ENCODE measurements at regions of chr20 and their contacts with region 1.

Region 1: DNA sequence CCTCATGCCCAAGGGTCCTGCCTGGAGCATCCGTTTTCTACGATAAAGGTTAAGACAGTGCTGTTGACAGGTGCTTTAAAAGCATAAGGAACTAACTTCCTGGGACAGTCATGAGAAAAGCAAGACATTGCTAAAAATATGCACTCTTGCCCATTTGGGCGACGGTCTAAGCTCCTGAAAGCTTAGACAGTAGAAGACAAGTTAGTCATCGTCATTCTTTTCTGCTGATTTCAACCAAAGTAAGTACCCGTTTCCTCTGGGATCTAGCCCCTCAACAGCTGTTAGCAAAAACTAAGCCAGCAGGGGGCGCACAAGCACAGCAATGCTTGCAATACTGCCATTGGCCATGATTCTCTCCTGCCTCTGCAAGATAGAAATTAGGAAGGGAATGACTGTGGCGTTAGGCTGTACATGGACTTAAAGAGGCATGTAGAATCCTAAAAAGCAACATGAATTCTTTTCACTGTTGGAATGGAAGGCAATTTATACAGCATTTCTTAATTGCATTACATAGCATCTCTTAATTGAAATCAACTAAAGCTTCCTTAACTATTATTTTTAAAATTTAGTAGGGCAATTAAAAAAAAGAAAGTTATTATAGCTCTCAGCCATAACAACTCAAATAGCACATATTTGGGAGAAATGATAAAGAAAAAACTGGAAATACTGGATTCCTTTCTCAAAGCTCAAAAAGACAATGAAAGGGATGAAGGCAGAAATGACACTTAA is 147.8 kb upstream of the RALGAPA2 start:
- DNase-seq: peak; percentile 82 to 99
- H3K4me3 ChIP-seq: no peak overlapping the region
- H3K27ac ChIP-seq: no peak overlapping the region
- H3K4me1 ChIP-seq: no peaks in the 10 kb centered on the region; a peak in 1 of 7 replicates
- H3K27me3 ChIP-seq: no peaks in the 10 kb centered on the region
- CTCF ChIP-seq: peak; percentile 72 to 99 (median 95)
- EP300 ChIP-seq: no peak
- POLR2A ChIP-seq: no peak
- RAD21 ChIP-seq: peak; percentile 95 to 96

Region 2: DNA sequence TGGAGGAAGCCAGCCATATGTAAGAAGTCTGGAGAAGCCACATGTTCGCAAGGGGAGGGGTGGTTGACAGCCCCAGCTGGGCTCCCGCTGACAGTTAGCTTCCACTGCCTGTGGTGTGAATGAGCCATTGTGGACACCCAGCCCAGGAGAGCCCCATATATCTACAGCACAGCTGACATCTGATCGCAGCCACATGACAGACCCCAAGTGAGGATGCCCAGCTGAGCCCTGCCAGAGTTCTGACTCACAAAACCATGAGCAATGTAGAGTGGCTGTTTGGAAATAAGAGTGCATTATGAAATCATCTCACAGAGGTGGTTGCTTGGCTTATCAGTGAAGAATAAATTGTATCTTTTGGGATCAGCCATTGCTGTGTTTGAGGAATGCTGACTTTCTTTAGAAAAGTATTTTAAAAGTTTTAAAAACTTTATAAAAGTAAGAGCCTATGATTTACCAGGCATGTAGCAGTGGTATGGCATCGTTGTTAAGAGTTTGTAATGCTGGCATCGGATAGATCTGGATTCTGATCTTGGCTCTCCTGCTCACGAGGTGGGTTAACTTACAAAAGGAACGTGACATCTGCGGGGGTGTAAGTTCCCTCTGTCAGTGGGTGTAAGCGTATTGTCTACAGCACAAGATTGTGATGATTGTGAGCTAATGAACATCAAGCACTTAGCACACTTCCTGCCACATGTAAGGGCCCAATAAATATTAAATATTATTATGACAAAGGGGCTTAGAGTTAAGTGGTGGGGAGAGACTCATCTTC is 783.8 kb before region 1 on chr20:
- CTCF ChIA-PET with region 1: no interaction called
- POLR2A ChIA-PET with region 1: no interaction called
- DNase-seq: no peak
- H3K4me3 ChIP-seq: no peak overlapping the region
- H3K27ac ChIP-seq: no peak overlapping the region
- H3K4me1 ChIP-seq: peaks cover 5 to 8% (median 5%) of the 10 kb centered on the region in 4 experiments; a peak in 4 of 7 replicates
- H3K27me3 ChIP-seq: no peaks in the 10 kb centered on the region
- CTCF ChIP-seq: no peak
- EP300 ChIP-seq: no peak
- POLR2A ChIP-seq: no peak
- RAD21 ChIP-seq: no peak

Region 3: DNA sequence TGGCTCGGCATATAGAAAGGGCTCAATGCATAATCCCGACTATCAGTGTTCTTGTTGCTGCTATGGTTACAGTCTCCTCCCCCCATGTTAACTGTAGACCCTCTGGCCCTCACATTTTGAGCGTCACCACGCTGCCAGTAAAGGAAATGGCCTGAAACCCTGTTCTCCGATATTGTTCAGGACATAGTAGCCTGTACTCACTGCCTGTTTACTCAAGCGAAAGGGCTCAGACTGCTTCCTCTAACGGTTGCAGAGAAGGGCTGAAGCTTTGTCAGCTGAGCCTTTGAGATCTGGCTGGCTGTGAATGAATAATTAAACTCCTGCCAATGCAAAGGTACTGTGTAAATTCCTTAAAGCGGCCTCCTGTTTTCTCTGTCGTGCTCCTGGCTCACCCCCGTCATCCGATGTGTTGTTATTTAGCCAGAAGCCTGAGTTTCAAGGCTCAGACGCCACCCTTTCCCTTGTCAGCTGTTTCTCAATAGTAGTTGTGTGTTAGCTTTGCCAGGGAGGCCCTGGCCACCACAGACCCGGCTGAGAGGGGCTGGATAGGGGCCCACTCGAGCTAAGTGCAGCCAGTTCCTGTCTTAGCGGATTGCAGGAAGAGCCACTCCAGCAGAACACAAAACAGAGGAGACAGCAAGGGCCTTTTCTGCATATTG is 116.6 kb before region 1 on chr20:
- CTCF ChIA-PET with region 1: no interaction called
- POLR2A ChIA-PET with region 1: no interaction called
- DNase-seq: peak in 1 of 2 experiments; percentile 56
- H3K4me3 ChIP-seq: peak overlapping the region in 1 of 4 experiments; percentile 20; a peak in 2 of 8 replicates
- H3K27ac ChIP-seq: peak overlapping the region; percentile 51
- H3K4me1 ChIP-seq: peaks cover 4 to 16% (median 13%) of the 10 kb centered on the region in 4 experiments
- H3K27me3 ChIP-seq: no peaks in the 10 kb centered on the region; a peak in 1 of 7 replicates
- CTCF ChIP-seq: no peak
- EP300 ChIP-seq: no peak
- POLR2A ChIP-seq: no peak
- RAD21 ChIP-seq: no peak

Region 4: GRCh38 chr20:20837574-20838021 is 22.6 kb before region 1 on chr20:
- CTCF ChIA-PET with region 1: interaction called, 67 read pairs
- POLR2A ChIA-PET with region 1: no interaction called
- DNase-seq: peak in 1 of 2 experiments; percentile 78
- H3K4me3 ChIP-seq: no peak overlapping the region
- H3K27ac ChIP-seq: no peak overlapping the region
- H3K4me1 ChIP-seq: no peaks in the 10 kb centered on the region
- H3K27me3 ChIP-seq: no peaks in the 10 kb centered on the region; a peak in 1 of 7 replicates
- CTCF ChIP-seq: peak; percentile 53 to 77 (median 72)
- EP300 ChIP-seq: no peak
- POLR2A ChIP-seq: no peak
- RAD21 ChIP-seq: peak; percentile 83 to 85

Region 5: DNA sequence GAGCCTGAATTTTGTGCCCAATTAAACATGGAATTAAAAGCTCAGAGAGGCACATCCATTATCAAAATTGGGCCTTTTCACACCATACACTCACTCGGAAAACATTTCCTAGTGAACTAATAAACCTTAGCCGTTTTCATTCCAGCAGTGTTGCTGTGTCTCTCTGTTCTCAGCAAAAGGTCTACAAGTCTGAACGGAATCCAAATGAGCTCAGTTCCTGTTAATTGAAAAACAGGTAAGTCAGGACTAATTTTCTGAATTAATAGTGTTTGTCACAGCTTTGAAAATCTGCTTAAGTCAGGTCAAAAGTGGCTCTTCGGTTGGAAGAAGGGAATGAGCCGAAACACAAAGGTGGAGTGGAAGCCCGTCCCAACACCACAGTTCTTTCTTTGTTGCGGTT is 15.5 kb after region 1 on chr20:
- CTCF ChIA-PET with region 1: interaction called, 33 read pairs
- POLR2A ChIA-PET with region 1: no interaction called
- DNase-seq: no peak
- H3K4me3 ChIP-seq: no peak overlapping the region
- H3K27ac ChIP-seq: no peak overlapping the region
- H3K4me1 ChIP-seq: no peaks in the 10 kb centered on the region
- H3K27me3 ChIP-seq: no peaks in the 10 kb centered on the region
- CTCF ChIP-seq: no peak
- EP300 ChIP-seq: no peak
- POLR2A ChIP-seq: no peak
- RAD21 ChIP-seq: no peak

Region 6: DNA sequence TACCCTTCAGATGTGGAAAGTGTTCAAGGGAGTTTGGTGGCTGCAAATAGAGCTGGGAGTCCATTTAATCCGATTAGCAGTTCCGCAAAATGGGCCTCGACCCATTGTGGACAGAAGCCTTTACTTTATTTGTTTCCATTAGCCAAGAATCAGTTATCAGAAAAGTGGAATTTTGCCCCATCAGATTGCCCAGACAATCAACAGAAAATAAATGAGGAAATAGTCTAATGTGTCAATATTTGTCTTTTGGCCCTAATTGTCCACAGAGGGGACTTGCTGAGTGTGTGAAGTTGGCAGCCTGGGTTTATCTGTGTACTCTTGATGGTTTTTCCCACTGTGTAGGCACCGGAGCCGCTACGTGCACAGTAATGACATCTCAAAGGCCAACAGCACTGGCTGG is 111.6 kb after region 1 on chr20:
- CTCF ChIA-PET with region 1: interaction called, 10 read pairs
- POLR2A ChIA-PET with region 1: no interaction called
- DNase-seq: no peak
- H3K4me3 ChIP-seq: no peak overlapping the region
- H3K27ac ChIP-seq: no peak overlapping the region
- H3K4me1 ChIP-seq: peaks cover 0 to 13% (median 2%) of the 10 kb centered on the region in 4 experiments; a peak in 1 of 7 replicates
- H3K27me3 ChIP-seq: no peaks in the 10 kb centered on the region
- CTCF ChIP-seq: no peak
- EP300 ChIP-seq: no peak
- POLR2A ChIP-seq: no peak
- RAD21 ChIP-seq: no peak

Region 7: GRCh38 chr20:21048841-21049273 is 188.6 kb after region 1 on chr20:
- CTCF ChIA-PET with region 1: interaction called, 35 read pairs
- POLR2A ChIA-PET with region 1: no interaction called
- DNase-seq: peak in 1 of 2 experiments; percentile 96
- H3K4me3 ChIP-seq: no peak overlapping the region
- H3K27ac ChIP-seq: no peak overlapping the region
- H3K4me1 ChIP-seq: peaks cover 5 to 13% (median 10%) of the 10 kb centered on the region in 4 experiments; a peak in 6 of 7 replicates
- H3K27me3 ChIP-seq: no peaks in the 10 kb centered on the region
- CTCF ChIP-seq: peak; percentile 81 to 91 (median 90)
- EP300 ChIP-seq: no peak
- POLR2A ChIP-seq: no peak
- RAD21 ChIP-seq: peak; percentile 83 to 86

Region 8: DNA sequence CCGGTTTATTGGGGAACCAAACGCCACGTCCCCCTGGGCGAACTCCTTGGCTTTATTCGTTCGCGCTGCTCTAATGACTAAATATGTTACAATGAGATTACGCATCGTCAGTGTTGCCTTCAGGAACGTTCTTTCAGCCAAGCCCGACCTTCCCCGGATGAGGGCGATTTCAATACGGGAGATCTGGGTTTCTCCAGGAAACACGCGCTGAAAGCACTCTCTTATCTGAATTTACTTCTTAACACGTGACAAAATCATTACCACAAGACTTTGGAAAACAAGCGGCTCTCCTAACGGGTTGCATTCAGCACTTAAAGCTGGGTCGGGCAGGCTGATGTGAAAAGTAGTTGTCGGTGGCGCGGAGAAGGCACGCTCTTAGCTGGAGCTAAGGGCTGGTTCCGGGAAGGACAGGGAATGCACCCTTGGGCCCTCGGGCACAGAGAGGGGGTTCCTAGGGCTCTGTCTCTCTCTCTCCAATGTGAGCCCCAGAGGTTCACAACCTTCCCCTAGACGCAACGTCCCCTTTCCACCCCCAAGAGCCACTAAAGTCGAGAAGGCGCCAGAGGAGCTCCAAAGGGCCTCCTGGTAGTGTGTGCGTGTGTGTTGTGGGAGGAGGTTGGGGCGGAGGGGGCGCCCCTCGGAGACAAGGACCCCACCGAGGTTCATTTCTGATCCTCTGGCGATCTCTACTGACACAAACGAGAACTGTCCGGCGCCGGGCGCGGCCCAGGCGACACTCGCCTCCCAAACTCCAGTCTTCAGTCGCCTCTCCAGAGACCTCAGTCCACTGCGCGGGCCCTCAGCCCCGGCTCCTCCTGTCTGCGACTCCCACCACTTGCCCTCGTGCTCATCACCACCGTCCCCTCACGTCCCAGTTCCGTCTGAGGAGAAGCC is 660.7 kb after region 1 on chr20:
- CTCF ChIA-PET with region 1: interaction called, 16 read pairs
- POLR2A ChIA-PET with region 1: no interaction called
- DNase-seq: no peak
- H3K4me3 ChIP-seq: peak overlapping the region; percentile 32 to 59 (median 34); a peak in 7 of 8 replicates
- H3K27ac ChIP-seq: no peak overlapping the region
- H3K4me1 ChIP-seq: peaks cover 19 to 53% (median 31%) of the 10 kb centered on the region in 4 experiments
- H3K27me3 ChIP-seq: peaks cover 94 to 100% (median 100%) of the 10 kb centered on the region in 4 experiments
- CTCF ChIP-seq: peak; percentile 59 to 75 (median 72)
- EP300 ChIP-seq: no peak
- POLR2A ChIP-seq: no peak
- RAD21 ChIP-seq: peak; percentile 77 to 85

Measured in H1 (cell line).